Heart right ventricle (tissue), 16 donors: ENCODE measurements at regions of chr6 and their contacts with region 1.

Region 1: GRCh38 chr6:7910654-7911344 is at the start of gene TXNDC5:
- DNase-seq: peak; percentile 83 to 87
- ATAC-seq: peak; percentile 86 to 95 (median 90)
- H3K4me3 ChIP-seq: peak within 1 kb of the TSS; percentile 58 to 88 (median 73)
- H3K27ac ChIP-seq: peak within 1 kb of the TSS; percentile 56 to 88 (median 86)
- H3K4me1 ChIP-seq: peaks cover 4 to 42% (median 17%) of the 10 kb centered on the region in 9 donors
- H3K27me3 ChIP-seq: no peaks in the 10 kb centered on the region
- CTCF ChIP-seq: no peak
- total RNA-seq, gene TXNDC5: 26.7 to 78.0 (median 38.3) TPM

Region 2: DNA sequence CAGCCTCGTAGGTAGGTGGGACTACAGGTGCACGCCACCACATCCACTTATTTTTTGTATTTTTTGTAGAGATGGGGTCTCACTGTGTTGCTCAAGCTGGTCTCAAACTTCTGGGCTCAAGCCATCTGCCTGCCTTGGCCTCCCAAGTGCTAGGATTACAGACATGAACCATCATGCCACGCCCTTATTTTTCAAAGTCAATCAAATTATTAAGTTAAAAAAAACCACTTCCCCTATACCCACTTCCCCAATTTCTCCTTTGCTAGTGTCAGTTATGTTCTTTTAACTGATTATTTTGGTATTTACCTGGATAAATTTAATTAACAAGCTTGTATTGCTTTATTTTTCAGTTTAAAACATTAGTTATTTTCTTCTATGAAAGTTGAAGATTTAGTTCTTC is 471.6 kb before region 1 on chr6:
- intact Hi-C with region 1: no loop called
- DNase-seq: no peak
- ATAC-seq: no peak
- H3K4me3 ChIP-seq: no peak overlapping the region
- H3K27ac ChIP-seq: no peak overlapping the region
- H3K4me1 ChIP-seq: no peaks in the 10 kb centered on the region
- H3K27me3 ChIP-seq: no peaks in the 10 kb centered on the region
- CTCF ChIP-seq: no peak

Region 3: GRCh38 chr6:7974938-7975763 is 64.4 kb after region 1 on chr6:
- intact Hi-C with region 1: loop called in 6 of 10 experiments (anchors 2 to 10 kb)
- DNase-seq: peak; percentile 75 to 87
- ATAC-seq: peak; percentile 91 to 99 (median 97)
- H3K4me3 ChIP-seq: peak overlapping the region in 8 of 10 donors; percentile 1 to 29 (median 10)
- H3K27ac ChIP-seq: peak overlapping the region in 8 of 10 donors; percentile 27 to 72 (median 46)
- H3K4me1 ChIP-seq: peaks cover 4 to 26% (median 19%) of the 10 kb centered on the region in 9 donors
- H3K27me3 ChIP-seq: no peaks in the 10 kb centered on the region
- CTCF ChIP-seq: no peak

Region 4: DNA sequence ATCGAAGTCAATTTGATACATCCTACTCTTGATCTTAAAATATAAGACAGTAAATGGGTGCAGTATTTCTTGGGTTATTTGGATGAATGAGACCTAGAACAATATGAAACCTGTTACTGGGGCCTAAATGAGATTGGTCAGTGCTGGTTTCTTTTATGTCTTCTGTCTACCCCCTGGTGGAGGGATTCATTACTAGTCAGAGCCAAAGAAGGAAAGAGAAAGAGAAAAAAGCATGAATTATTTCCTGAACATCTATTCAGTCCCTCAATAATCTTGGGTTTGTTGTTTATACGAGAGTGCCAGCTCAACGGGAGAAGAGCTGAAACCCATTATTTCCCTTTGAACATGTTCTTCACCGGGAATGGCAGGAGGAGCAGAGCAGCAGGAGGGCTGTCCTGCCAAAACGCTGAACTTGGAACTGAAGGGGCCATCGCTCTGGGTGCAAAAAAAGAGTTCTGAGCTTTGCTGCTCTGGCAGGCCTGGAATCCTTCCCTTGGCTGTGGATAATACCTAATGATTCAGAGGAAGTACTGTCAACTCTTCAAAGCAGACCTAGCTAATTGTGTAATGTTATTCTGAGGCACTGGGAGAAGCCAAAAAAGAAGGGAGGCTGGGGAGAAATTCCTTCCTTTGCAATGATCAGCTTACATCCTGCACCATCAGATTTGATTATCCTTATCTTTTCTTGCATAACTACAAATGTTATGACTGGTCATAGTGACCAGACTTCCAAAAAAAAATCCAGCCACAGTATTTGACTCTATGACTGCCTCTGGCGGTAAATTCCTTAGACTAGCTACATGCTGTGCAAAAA is 81.4 kb after region 1 on chr6:
- intact Hi-C with region 1: loop called in 3 of 10 experiments (anchors 5 to 10 kb)
- DNase-seq: peak in 1 of 2 donors; percentile 18
- ATAC-seq: peak; percentile 60 to 90 (median 74)
- H3K4me3 ChIP-seq: peak overlapping the region in 1 of 10 donors; percentile 13
- H3K27ac ChIP-seq: peak overlapping the region in 5 of 10 donors; percentile 20 to 77 (median 31)
- H3K4me1 ChIP-seq: peaks cover 0 to 24% (median 9%) of the 10 kb centered on the region in 9 donors
- H3K27me3 ChIP-seq: no peaks in the 10 kb centered on the region
- CTCF ChIP-seq: peak; percentile 11 to 65 (median 47)

Region 5: GRCh38 chr6:8006208-8006607 is 95.4 kb after region 1 on chr6:
- intact Hi-C with region 1: loop called in 1 of 10 experiments (anchors 10 kb)
- DNase-seq: no peak
- ATAC-seq: peak in 3 of 8 donors; percentile 56 to 71 (median 70)
- H3K4me3 ChIP-seq: no peak overlapping the region
- H3K27ac ChIP-seq: no peak overlapping the region
- H3K4me1 ChIP-seq: peaks cover 0 to 8% (median 0%) of the 10 kb centered on the region in 9 donors
- H3K27me3 ChIP-seq: no peaks in the 10 kb centered on the region
- CTCF ChIP-seq: peak; percentile 23 to 70 (median 60)